ENCODE measurements at regions of chr1 and their contacts with region 1.

Region 1: GRCh38 chr1:19661721-19662228 is 2.9 kb upstream of the HTR6 start:
- DNase-seq: peak in 9 of 14 experiments; percentile 32 to 80 (median 45)
- ATAC-seq: peak; percentile 21
- H3K4me3 ChIP-seq: no peak overlapping the region
- H3K4me3 Mint-ChIP-seq: peak overlapping the region; percentile 70
- H3K27ac ChIP-seq: no peak overlapping the region
- H3K27ac Mint-ChIP-seq: no peak overlapping the region
- H3K4me1 ChIP-seq: peaks cover 33% of the 10 kb centered on the region
- H3K4me1 Mint-ChIP-seq: peaks cover 38% of the 10 kb centered on the region
- H3K27me3 ChIP-seq: peaks cover 10% of the 10 kb centered on the region in 2 experiments
- H3K27me3 Mint-ChIP-seq: peaks cover 37% of the 10 kb centered on the region
- CTCF ChIP-seq: peak; percentile 86

Region 2: GRCh38 chr1:19704247-19705113 is 42.7 kb after region 1 on chr1:
- CTCF ChIA-PET with region 1: interaction called, 68 read pairs
- POLR2A ChIA-PET with region 1: interaction called, 11 read pairs
- intact Hi-C with region 1: loop called (anchors 1 kb)
- DNase-seq: peak; percentile 29 to 77 (median 58)
- ATAC-seq: peak; percentile 85
- H3K4me3 ChIP-seq: no peak overlapping the region
- H3K4me3 Mint-ChIP-seq: no peak overlapping the region
- H3K27ac ChIP-seq: no peak overlapping the region
- H3K27ac Mint-ChIP-seq: no peak overlapping the region
- H3K4me1 ChIP-seq: peaks cover 10% of the 10 kb centered on the region
- H3K4me1 Mint-ChIP-seq: peaks cover 12% of the 10 kb centered on the region
- H3K27me3 ChIP-seq: no peaks in the 10 kb centered on the region
- H3K27me3 Mint-ChIP-seq: no peaks in the 10 kb centered on the region
- CTCF ChIP-seq: peak; percentile 89

Region 3: GRCh38 chr1:19811206-19811851 is 149.6 kb after region 1 on chr1:
- CTCF ChIA-PET with region 1: no interaction called
- POLR2A ChIA-PET with region 1: no interaction called
- intact Hi-C with region 1: loop called in 1 of 2 experiments (anchors 2 kb)
- DNase-seq: peak; percentile 9 to 66 (median 34)
- ATAC-seq: peak; percentile 29
- H3K4me3 ChIP-seq: no peak overlapping the region
- H3K4me3 Mint-ChIP-seq: no peak overlapping the region
- H3K27ac ChIP-seq: no peak overlapping the region
- H3K27ac Mint-ChIP-seq: no peak overlapping the region
- H3K4me1 ChIP-seq: no peaks in the 10 kb centered on the region
- H3K4me1 Mint-ChIP-seq: no peaks in the 10 kb centered on the region
- H3K27me3 ChIP-seq: no peaks in the 10 kb centered on the region
- H3K27me3 Mint-ChIP-seq: no peaks in the 10 kb centered on the region
- CTCF ChIP-seq: peak; percentile 57

Region 4: GRCh38 chr1:20047096-20047495 is 385.3 kb after region 1 on chr1:
- CTCF ChIA-PET with region 1: no interaction called
- POLR2A ChIA-PET with region 1: no interaction called
- intact Hi-C with region 1: loop called in 1 of 2 experiments (anchors 10 kb)
- DNase-seq: no peak
- ATAC-seq: no peak
- H3K4me3 ChIP-seq: no peak overlapping the region
- H3K4me3 Mint-ChIP-seq: no peak overlapping the region
- H3K27ac ChIP-seq: no peak overlapping the region
- H3K27ac Mint-ChIP-seq: no peak overlapping the region
- H3K4me1 ChIP-seq: no peaks in the 10 kb centered on the region
- H3K4me1 Mint-ChIP-seq: no peaks in the 10 kb centered on the region
- H3K27me3 ChIP-seq: no peaks in the 10 kb centered on the region
- H3K27me3 Mint-ChIP-seq: peaks cover 6% of the 10 kb centered on the region
- CTCF ChIP-seq: no peak